ENCODE measurements at regions of chr3 and their contacts with region 1.

Region 1: GRCh38 chr3:152961323-152961722 is 126.4 kb downstream of the P2RY1 start:
- DNase-seq: peak in 1 of 2 experiments; percentile 37
- H3K4me3 ChIP-seq: no peak overlapping the region
- H3K4me3 Mint-ChIP-seq: no peak overlapping the region
- H3K27ac Mint-ChIP-seq: no peak overlapping the region
- H3K4me1 ChIP-seq: peaks cover 27% of the 10 kb centered on the region
- H3K4me1 Mint-ChIP-seq: peaks cover 6% of the 10 kb centered on the region
- H3K27me3 ChIP-seq: no peaks in the 10 kb centered on the region
- H3K27me3 Mint-ChIP-seq: no peaks in the 10 kb centered on the region
- CTCF ChIP-seq: peak; percentile 39 to 46

Region 2: GRCh38 chr3:152508705-152509104 is 452.6 kb before region 1 on chr3:
- CTCF ChIA-PET with region 1: no interaction called
- POLR2A ChIA-PET with region 1: no interaction called
- intact Hi-C with region 1: loop called (anchors 1 kb)
- DNase-seq: peak in 1 of 2 experiments; percentile 24
- H3K4me3 ChIP-seq: no peak overlapping the region
- H3K4me3 Mint-ChIP-seq: no peak overlapping the region
- H3K27ac Mint-ChIP-seq: no peak overlapping the region
- H3K4me1 ChIP-seq: no peaks in the 10 kb centered on the region
- H3K4me1 Mint-ChIP-seq: no peaks in the 10 kb centered on the region
- H3K27me3 ChIP-seq: no peaks in the 10 kb centered on the region
- H3K27me3 Mint-ChIP-seq: no peaks in the 10 kb centered on the region
- CTCF ChIP-seq: peak; percentile 22 to 43

Region 3: DNA sequence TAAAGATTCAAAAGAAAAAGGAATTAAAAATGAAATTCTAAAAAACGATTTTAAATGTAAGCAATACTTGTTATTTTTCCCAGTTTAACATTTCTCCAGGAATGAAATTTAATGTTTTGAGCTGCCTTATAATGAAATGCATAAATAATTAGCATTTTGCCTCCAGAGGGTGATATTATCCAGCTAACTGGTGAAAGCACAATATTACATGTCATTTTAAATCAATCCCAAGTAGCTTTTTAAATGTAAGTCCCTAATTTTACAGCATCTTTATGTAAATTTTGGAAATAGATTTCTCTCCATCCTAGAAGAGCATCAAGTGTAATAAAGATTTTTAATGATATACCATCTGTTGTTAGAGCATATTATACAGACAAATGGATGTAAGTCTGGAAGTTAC is 265.5 kb before region 1 on chr3:
- CTCF ChIA-PET with region 1: interaction called, 3 read pairs
- POLR2A ChIA-PET with region 1: no interaction called
- intact Hi-C with region 1: loop called (anchors 10 kb)
- DNase-seq: no peak
- H3K4me3 ChIP-seq: no peak overlapping the region
- H3K4me3 Mint-ChIP-seq: no peak overlapping the region
- H3K27ac Mint-ChIP-seq: no peak overlapping the region
- H3K4me1 ChIP-seq: no peaks in the 10 kb centered on the region
- H3K4me1 Mint-ChIP-seq: no peaks in the 10 kb centered on the region
- H3K27me3 ChIP-seq: no peaks in the 10 kb centered on the region
- H3K27me3 Mint-ChIP-seq: peaks cover 5% of the 10 kb centered on the region
- CTCF ChIP-seq: no peak

Region 4: DNA sequence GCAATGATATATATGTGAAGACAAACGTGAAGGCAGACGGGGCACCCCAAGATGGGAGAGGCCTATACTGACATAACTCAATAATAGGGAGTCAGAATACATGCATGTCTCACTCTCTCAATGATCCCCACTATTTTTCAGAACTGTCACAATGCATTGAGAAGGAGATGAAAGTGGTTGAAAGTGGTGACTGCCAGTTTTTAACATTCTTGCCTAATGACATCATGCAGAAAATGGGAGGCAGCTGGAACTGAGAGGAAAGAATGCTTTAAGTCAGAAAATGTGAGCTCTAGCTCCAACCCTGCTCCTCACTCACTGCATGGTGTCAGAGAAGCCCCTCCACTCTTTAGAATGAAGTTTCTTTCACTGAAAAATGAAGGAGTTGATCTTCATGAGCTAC is 181.7 kb before region 1 on chr3:
- CTCF ChIA-PET with region 1: no interaction called
- POLR2A ChIA-PET with region 1: no interaction called
- intact Hi-C with region 1: no loop called
- DNase-seq: no peak
- H3K4me3 ChIP-seq: no peak overlapping the region
- H3K4me3 Mint-ChIP-seq: no peak overlapping the region
- H3K27ac Mint-ChIP-seq: no peak overlapping the region
- H3K4me1 ChIP-seq: peaks cover 10% of the 10 kb centered on the region
- H3K4me1 Mint-ChIP-seq: peaks cover 12% of the 10 kb centered on the region
- H3K27me3 ChIP-seq: no peaks in the 10 kb centered on the region
- H3K27me3 Mint-ChIP-seq: no peaks in the 10 kb centered on the region
- CTCF ChIP-seq: no peak

Region 5: GRCh38 chr3:152834776-152835600 is 126.3 kb before region 1 on chr3 and contains the start of gene P2RY1:
- CTCF ChIA-PET with region 1: no interaction called
- POLR2A ChIA-PET with region 1: no interaction called
- intact Hi-C with region 1: loop called (anchors 2 kb)
- DNase-seq: peak; percentile 85 to 86
- H3K4me3 ChIP-seq: peak within 1 kb of the TSS; percentile 70
- H3K4me3 Mint-ChIP-seq: peak within 1 kb of the TSS; percentile 88
- H3K27ac Mint-ChIP-seq: peak within 1 kb of the TSS; percentile 84
- H3K4me1 ChIP-seq: no peaks in the 10 kb centered on the region
- H3K4me1 Mint-ChIP-seq: no peaks in the 10 kb centered on the region
- H3K27me3 ChIP-seq: no peaks in the 10 kb centered on the region
- H3K27me3 Mint-ChIP-seq: no peaks in the 10 kb centered on the region
- CTCF ChIP-seq: peak in 1 of 2 experiments; percentile 44
- total RNA-seq, gene P2RY1: 6.0 and 8.5 TPM in 2 replicates

Measured in Caco-2 (cell line).